HEK293 (cell line): ENCODE measurements at regions of chr14 and their contacts with region 1.

Region 1: DNA sequence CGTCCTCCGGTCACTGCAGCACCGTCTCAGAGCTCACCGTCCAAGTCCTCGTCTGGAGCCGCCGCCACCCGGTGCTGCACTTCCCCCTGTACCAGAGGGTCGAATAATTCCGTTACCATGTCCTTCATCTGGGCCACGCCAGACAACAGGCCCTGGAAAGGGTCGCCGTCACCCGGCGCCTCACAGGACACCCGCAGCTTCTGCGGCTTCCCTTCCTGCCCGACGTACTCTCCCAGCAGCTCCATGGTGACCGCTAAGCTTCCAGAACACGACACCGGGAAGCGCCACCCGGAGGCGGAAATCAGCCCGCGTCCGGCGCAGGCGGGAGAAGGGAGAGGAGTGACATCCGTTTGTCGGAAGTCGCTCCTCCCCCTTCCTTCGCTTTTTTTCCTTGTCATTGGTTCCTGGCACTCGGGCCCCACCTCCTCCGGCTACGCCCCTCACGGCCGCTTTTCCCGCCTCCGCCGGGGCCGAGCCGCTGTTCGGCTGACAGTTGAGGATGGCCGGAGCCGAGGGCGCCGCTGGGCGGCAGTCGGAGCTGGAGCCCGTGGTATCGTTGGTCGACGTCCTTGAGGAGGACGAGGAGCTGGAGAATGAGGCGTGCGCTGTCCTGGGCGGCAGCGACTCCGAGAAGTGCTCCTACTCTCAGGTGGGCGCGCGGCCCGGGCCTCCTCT is at the starts of genes GON7 and UBR7:
- H3K4me3 ChIP-seq: peak within 1 kb of the TSS; percentile 83
- H3K27ac ChIP-seq: peak within 1 kb of the TSS; percentile 96
- H3K4me1 ChIP-seq: 0 out of 2 replicates have a peak, but pooled peaks cover 2% of the 10 kb centered on the region
- CTCF ChIP-seq: no peak; the same call in none of the 2 replicates

Region 2: GRCh38 chr14:93184388-93185353 is 22.3 kb before region 1 on chr14 and contains the starts of genes LYSET and MOAP1:
- CTCF ChIA-PET with region 1: interaction called, 14 read pairs
- POLR2A ChIA-PET with region 1: interaction called, 44 read pairs
- H3K4me3 ChIP-seq: peak within 1 kb of the TSS; percentile 91
- H3K27ac ChIP-seq: peak within 1 kb of the TSS; percentile 97
- H3K4me1 ChIP-seq: peaks cover 6% of the 10 kb centered on the region; the same call in 1 of the 2 replicates
- CTCF ChIP-seq: peak; percentile 75